ENCODE measurements at regions of chr9 and their contacts with region 1.

Region 1: DNA sequence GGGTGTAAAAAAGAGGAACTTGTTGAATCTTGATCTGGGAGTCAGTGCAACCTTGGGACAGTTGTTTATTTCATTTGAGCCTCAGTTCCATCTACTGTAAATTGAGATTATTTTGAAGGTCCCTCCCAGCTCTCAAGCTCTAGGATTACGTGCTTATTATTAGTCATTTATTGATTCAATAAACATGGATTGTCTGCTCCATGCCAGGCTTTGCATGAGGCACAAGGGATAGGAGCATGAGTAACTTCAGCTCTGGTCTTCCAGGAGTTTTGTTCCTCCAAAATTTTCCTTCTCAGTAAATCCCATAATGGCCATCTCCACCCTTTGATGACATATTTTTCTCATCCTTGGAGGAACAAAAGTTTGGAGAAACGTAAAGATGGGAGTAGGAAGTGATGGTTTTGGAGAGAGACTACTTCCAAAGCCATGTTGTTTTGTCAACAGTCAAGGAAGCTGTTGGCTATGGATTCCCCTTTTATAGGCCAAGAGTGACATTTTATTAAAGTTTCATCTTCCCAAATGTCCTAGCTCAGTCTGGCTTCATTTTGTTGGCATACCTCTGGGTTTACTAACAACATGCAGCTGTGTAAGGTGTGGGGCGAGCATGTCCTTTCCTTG is 244.6 kb downstream of the DMRT2 start:
- DNase-seq: no peak
- H3K4me3 ChIP-seq: no peak overlapping the region
- CTCF ChIP-seq: no peak

Region 2: DNA sequence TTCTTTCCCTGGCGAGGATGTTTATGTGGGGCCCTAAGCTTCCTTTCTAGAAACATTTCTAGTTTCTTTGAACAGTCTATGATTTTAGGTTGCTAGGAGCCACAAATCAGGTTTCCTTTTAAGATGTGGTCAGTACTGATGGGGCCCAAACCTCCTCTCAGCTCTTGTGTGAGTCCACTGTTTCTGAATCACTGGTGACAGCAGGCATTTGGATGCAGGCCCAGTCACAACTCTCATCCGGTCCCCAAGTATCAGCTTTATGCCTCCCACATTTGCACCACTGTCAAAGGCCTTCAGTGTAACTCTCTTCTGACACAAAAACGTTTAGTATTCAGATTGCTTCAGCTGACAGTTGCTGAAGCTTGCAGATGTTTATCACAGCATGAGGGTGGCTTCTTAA is 236.8 kb before region 1 on chr9:
- in situ Hi-C with region 1: no loop called
- DNase-seq: no peak
- H3K4me3 ChIP-seq: no peak overlapping the region
- CTCF ChIP-seq: no peak

Region 3: GRCh38 chr9:1256178-1256577 is 38.6 kb before region 1 on chr9:
- in situ Hi-C with region 1: loop called (anchors 5 kb)
- DNase-seq: no peak
- H3K4me3 ChIP-seq: no peak overlapping the region
- CTCF ChIP-seq: no peak

Region 4: DNA sequence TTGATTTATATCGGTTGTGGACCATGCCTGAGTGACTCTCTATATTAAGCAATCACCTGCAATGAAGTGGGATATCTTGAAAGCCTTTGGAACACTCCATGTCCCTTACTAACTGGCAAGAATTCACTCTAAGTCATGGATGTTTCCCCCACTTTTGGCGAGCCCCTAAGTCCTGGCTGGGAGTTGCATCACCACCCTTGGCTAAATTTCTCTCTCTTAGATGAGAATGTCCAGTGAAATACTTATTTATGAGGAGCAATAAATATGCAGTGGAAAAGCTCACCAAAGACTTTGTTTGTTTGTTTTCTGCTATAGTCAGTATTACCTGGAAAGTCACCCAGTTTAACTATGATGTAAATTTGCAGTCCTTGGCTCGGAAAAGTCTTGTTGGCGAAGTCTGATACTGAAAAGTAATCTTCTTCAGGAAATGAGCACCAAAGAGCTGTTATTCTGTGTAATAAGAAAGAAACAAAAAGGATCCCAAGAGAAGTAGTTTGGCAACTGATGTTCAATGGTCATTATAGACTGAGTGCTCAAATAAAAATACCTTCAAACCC is 89.2 kb after region 1 on chr9:
- in situ Hi-C with region 1: no loop called
- DNase-seq: no peak
- H3K4me3 ChIP-seq: no peak overlapping the region
- CTCF ChIP-seq: no peak

Measured in astrocyte of the cerebellum (primary cell).